GM10248 (cell line): ENCODE measurements at regions of chr1 and their contacts with region 1.

Region 1: DNA sequence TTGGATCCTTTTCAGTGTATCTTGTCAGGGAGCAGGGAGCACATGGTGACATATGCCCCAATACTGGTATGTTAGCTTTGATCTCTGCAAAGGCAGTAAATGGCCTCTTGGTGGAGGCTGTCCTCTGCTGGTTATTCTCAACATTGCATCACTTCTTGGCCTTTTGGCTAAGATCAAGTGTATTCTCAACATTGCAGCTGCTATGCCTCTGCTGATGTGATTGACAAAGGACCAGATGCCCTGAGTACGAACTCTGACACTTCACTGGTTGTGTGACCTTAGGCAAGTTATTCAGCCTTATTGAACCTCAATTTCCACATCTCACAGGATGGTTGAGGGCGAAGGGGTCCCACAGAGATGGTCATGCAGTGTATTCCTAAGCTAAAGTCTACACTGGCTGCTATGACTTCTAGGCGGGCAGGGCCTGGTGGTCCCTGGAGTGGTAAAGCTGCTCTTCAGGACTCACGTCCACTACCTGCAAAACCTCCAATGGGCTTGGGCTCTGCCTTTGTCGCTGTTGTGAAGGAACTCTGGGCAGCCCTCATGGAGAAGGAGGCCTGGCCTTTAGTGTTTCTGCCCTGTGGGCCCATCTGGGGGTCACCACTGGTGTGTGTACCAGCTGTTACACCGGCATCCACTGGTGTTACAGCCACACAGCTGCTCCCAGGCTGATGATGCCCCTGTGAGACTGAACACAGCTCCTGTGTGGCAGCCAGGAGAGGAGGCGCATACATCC is 64.8 kb downstream of the DNTTIP2 start:
- DNase-seq: peak; percentile 61
- CTCF ChIP-seq: peak; percentile 94

Region 2: GRCh38 chr1:93600663-93601062 is 213.6 kb before region 1 on chr1:
- CTCF ChIA-PET with region 1: interaction called, 10 read pairs
- POLR2A ChIA-PET with region 1: no interaction called
- DNase-seq: no peak
- CTCF ChIP-seq: no peak

Region 3: DNA sequence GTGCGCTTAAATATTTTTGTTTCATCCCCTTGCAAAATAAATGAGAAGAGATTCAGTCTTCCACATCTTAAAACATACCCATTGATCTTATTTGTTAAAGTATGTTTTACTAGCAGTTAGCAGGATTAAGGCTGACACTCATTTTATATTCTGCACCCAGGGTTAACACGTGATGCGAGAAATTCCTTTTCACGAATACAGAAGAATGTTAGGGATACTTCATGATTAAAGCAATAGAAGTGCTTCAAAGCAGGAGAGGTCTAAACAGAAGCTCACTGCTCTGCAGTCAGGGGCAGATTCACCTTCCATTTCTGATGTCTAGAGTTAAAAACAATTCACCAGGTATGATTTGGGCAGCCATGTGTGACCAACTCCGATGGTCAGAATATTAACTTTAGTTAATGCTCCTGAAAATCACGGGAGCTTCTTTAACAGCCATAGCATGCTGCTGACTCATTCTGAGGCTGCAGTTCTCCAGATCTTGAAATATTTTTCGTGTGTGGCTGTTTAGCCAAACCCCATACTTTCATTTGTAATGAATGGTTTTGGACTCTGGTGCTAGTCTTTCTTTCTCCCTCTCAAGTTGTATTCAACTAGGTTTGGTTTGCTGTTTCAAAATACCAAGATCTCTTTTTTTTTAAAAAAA is 152.3 kb before region 1 on chr1:
- CTCF ChIA-PET with region 1: interaction called, 10 read pairs
- POLR2A ChIA-PET with region 1: no interaction called
- DNase-seq: no peak
- CTCF ChIP-seq: no peak

Region 4: DNA sequence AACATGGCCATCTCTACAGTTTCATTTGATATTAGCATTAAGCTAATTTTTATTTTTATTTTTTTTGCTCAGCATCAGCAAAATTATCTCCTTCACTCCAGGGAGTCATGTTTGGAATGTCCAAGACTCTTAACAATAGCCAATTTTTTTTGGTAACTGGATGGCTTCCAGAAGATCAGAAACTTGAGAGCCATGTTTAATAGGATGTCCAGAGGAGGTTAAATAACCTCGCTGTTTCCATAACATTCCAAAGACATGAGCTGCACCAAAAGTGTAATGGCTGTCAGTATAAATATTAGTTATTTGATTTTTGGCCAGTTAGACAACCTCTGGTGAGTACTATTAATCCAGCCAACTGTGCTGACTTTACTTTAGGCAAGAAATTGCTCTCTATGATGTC is 15.9 kb before region 1 on chr1:
- CTCF ChIA-PET with region 1: interaction called, 33 read pairs
- POLR2A ChIA-PET with region 1: no interaction called
- DNase-seq: no peak
- CTCF ChIP-seq: no peak

Region 5: GRCh38 chr1:93839307-93839706 is 25.1 kb after region 1 on chr1:
- CTCF ChIA-PET with region 1: interaction called, 64 read pairs
- POLR2A ChIA-PET with region 1: no interaction called
- DNase-seq: no peak
- CTCF ChIP-seq: no peak

Region 6: DNA sequence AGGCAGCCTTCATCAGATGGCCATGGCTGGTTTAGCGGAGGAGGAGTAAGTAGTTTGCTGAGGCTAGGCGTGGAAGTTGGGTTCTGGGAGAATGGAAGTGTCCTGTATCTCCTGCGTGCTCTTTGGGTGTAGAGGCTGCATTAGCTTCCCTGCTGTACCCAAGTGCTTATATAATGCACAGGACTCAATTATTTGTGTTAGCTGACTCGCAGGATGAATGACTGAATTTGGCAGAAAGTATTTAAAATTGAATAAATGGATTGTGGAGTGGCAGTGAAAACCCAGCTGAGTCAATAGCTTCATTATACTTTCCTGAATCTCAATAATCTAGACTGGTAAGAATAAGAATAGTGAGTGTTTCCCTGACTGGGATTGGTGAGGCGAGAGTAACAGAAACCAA is 51.0 kb after region 1 on chr1:
- CTCF ChIA-PET with region 1: no interaction called
- POLR2A ChIA-PET with region 1: no interaction called
- DNase-seq: no peak
- CTCF ChIP-seq: no peak

Region 7: GRCh38 chr1:93878889-93879586 is 64.8 kb after region 1 on chr1 and contains the start of gene DNTTIP2:
- CTCF ChIA-PET with region 1: no interaction called
- POLR2A ChIA-PET with region 1: no interaction called
- DNase-seq: peak; percentile 94
- CTCF ChIP-seq: no peak